Activated CD4-positive, alpha-beta memory T cell treated with anti-CD3 and anti-CD28 coated beads for 36 hours (primary cell): ENCODE measurements at regions of chr11 and their contacts with region 1.

Region 1: GRCh38 chr11:68839054-68839865 is 2.5 kb downstream of the CPT1A start:
- DNase-seq: peak; percentile 97
- H3K4me3 Mint-ChIP-seq: peak overlapping the region; percentile 78
- H3K27ac Mint-ChIP-seq: peak overlapping the region; percentile 88
- H3K4me1 Mint-ChIP-seq: peaks cover 55% of the 10 kb centered on the region
- H3K27me3 Mint-ChIP-seq: no peaks in the 10 kb centered on the region

Region 2: GRCh38 chr11:68459886-68460740 is 379.1 kb before region 1 on chr11:
- CTCF ChIA-PET with region 1: no interaction called
- POLR2A ChIA-PET with region 1: no interaction called
- intact Hi-C with region 1: loop called (anchors 5 kb)
- DNase-seq: peak; percentile 98
- H3K4me3 Mint-ChIP-seq: peak overlapping the region; percentile 88
- H3K27ac Mint-ChIP-seq: peak overlapping the region; percentile 91
- H3K4me1 Mint-ChIP-seq: peaks cover 28% of the 10 kb centered on the region
- H3K27me3 Mint-ChIP-seq: no peaks in the 10 kb centered on the region

Region 3: GRCh38 chr11:68610452-68611116 is 228.7 kb before region 1 on chr11:
- CTCF ChIA-PET with region 1: interaction called, 4 read pairs
- POLR2A ChIA-PET with region 1: no interaction called
- intact Hi-C with region 1: loop called (anchors 10 kb)
- DNase-seq: no peak
- H3K4me3 Mint-ChIP-seq: no peak overlapping the region
- H3K27ac Mint-ChIP-seq: no peak overlapping the region
- H3K4me1 Mint-ChIP-seq: no peaks in the 10 kb centered on the region
- H3K27me3 Mint-ChIP-seq: no peaks in the 10 kb centered on the region

Region 4: GRCh38 chr11:68714060-68714856 is 125.0 kb before region 1 on chr11:
- CTCF ChIA-PET with region 1: no interaction called
- POLR2A ChIA-PET with region 1: no interaction called
- intact Hi-C with region 1: no loop called
- DNase-seq: no peak
- H3K4me3 Mint-ChIP-seq: no peak overlapping the region
- H3K27ac Mint-ChIP-seq: no peak overlapping the region
- H3K4me1 Mint-ChIP-seq: no peaks in the 10 kb centered on the region
- H3K27me3 Mint-ChIP-seq: no peaks in the 10 kb centered on the region

Region 5: DNA sequence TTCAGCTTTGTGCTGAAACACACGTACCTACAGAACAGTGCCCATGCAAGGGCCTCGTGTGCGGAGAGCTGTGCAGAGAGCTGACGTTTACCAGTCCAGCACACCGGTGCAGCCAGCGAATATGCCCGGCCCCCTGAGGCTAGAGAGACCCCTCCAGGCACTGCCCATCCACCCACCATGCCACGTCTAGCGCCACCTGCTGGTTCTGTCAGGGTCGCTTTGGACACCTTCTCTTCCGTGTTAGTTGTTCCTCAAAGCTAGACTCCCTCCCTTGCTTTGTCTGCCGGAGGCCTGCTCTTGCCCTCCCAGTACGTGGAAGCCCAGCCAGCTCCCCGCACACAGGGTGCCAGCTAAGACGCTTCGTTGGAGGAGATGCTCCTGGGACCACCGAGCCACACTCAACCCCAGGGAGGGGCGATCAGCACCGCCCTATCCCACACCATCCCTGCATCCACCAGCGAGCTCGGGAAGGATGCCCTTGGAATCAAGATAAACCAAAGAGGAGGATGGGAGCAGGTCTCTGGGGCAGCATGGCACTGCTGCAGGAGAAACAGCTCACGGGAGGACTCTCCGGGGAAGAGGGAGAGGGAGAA is 40.9 kb before region 1 on chr11:
- CTCF ChIA-PET with region 1: interaction called, 29 read pairs
- POLR2A ChIA-PET with region 1: no interaction called
- intact Hi-C with region 1: no loop called
- DNase-seq: peak; percentile 53
- H3K4me3 Mint-ChIP-seq: no peak overlapping the region
- H3K27ac Mint-ChIP-seq: no peak overlapping the region
- H3K4me1 Mint-ChIP-seq: no peaks in the 10 kb centered on the region
- H3K27me3 Mint-ChIP-seq: no peaks in the 10 kb centered on the region

Region 6: GRCh38 chr11:69048718-69049489 is 209.6 kb after region 1 on chr11 and contains the start of gene TPCN2:
- CTCF ChIA-PET with region 1: no interaction called
- POLR2A ChIA-PET with region 1: no interaction called
- intact Hi-C with region 1: loop called (anchors 5 kb)
- DNase-seq: peak; percentile 94
- H3K4me3 Mint-ChIP-seq: peak within 1 kb of the TSS; percentile 76
- H3K27ac Mint-ChIP-seq: peak within 1 kb of the TSS; percentile 71
- H3K4me1 Mint-ChIP-seq: peaks cover 17% of the 10 kb centered on the region
- H3K27me3 Mint-ChIP-seq: peaks cover 2% of the 10 kb centered on the region
- total RNA-seq, gene TPCN2: 12.0 to 12.8 TPM